ENCODE measurements at regions of chr3 and their contacts with region 1.

Region 1: DNA sequence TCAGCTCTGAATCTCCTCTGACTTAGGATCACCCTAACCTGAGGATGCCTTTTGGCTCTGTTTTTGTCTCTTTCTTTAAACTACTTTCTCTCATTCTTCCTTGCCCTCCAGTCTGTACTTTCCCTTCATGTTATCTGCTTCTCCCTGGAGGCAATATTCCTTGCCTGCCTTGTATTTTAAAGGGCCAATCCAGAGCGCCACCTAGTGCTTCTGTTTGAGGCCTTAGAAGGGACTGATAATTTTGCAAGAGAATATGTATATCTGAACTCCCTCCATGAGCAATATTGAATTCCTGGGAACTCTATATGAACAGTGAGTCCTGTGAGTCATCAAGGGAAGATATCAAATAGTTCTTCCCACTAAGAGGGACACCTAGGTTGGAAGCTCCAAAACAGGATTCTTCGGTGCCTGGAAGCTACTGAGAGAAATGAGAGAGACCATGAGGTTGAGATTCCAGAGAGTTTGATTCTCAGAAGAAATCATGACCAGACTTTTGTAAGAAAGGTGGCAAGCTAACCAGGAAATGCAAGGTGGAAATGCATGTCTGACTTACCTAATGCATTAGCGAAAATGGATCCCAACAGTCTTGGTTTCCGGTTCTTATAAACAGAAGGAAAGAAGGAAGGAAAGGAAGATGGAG is 203.8 kb upstream of the CD96 start:
- DNase-seq: peak in 4 of 5 donors; percentile 18 to 28 (median 23)
- H3K4me3 ChIP-seq: no peak overlapping the region
- H3K4me3 Mint-ChIP-seq: no peak overlapping the region
- H3K27ac ChIP-seq: no peak overlapping the region
- H3K27ac Mint-ChIP-seq: peak overlapping the region in 1 of 7 donors; percentile 3
- H3K4me1 ChIP-seq: no peaks in the 10 kb centered on the region
- H3K4me1 Mint-ChIP-seq: peaks cover 2 to 10% (median 4%) of the 10 kb centered on the region in 4 donors
- H3K27me3 ChIP-seq: no peaks in the 10 kb centered on the region
- H3K27me3 Mint-ChIP-seq: no peaks in the 10 kb centered on the region

Region 2: DNA sequence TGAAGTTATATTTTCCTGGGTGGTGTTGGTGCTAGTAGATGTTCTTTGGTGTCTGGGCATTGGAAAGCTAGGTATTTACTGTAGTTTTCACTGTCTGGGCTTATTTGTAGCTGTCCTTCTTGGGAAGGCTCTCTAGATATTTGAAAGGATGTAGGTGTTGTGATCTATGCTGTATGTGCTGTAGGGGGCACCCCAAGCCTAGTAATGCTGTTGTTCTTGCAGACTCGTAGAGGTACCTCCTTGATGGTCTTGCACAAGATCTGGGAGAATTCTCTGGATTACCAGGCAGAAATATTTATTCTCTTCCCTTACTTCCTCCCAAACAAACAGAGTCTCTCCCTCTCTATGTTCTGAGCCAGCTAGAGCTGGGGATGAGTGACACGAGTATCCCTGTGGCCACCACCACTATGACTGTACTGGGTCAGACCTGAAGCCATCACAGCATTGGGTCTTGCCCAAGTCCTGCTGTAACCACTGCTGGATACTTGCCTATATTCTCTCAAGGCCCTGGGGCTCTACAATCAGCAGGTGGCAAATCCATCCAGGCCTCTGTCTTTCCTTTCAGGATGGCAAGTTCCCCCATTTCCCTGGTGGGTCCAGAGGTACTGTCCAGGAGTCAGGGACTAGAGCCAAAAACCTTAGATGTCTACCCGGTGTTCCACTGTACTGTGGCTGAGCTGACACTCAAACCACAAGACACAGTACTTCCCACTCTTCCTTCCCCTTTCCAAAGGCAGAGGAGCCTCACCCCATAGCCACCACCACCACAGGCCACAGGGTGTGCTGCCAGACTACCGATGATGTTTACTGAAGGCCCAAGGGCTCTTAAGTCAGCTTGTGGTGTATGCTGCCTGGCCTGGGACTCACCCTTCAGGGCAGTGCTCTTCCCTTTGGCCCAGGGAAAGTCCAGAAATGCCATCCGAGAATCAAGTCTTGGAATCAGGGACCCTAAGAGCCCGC is 1805.6 kb before region 1 on chr3:
- CTCF ChIA-PET with region 1: interaction called, 4 read pairs
- POLR2A ChIA-PET with region 1: no interaction called
- intact Hi-C with region 1: loop called (anchors 5 kb)
- DNase-seq: peak; percentile 21 to 50 (median 41)
- H3K4me3 ChIP-seq: no peak overlapping the region
- H3K4me3 Mint-ChIP-seq: no peak overlapping the region
- H3K27ac ChIP-seq: no peak overlapping the region
- H3K27ac Mint-ChIP-seq: no peak overlapping the region
- H3K4me1 ChIP-seq: no peaks in the 10 kb centered on the region
- H3K4me1 Mint-ChIP-seq: no peaks in the 10 kb centered on the region
- H3K27me3 ChIP-seq: no peaks in the 10 kb centered on the region
- H3K27me3 Mint-ChIP-seq: peaks cover 2 to 3% of the 10 kb centered on the region in 2 donors

Region 3: GRCh38 chr3:111071257-111072015 is 266.7 kb before region 1 on chr3 and contains the start of gene NECTIN3:
- CTCF ChIA-PET with region 1: interaction called, 3 read pairs
- POLR2A ChIA-PET with region 1: interaction called, 3 read pairs
- intact Hi-C with region 1: loop called (anchors 5 kb)
- DNase-seq: peak; percentile 84 to 92 (median 87)
- H3K4me3 ChIP-seq: peak within 1 kb of the TSS; percentile 78 to 82
- H3K4me3 Mint-ChIP-seq: peak within 1 kb of the TSS; percentile 93 to 97 (median 96)
- H3K27ac ChIP-seq: peak within 1 kb of the TSS; percentile 57
- H3K27ac Mint-ChIP-seq: peak within 1 kb of the TSS; percentile 90 to 95 (median 93)
- H3K4me1 ChIP-seq: peaks cover 32% of the 10 kb centered on the region
- H3K4me1 Mint-ChIP-seq: peaks cover 33 to 54% (median 44%) of the 10 kb centered on the region in 4 donors
- H3K27me3 ChIP-seq: no peaks in the 10 kb centered on the region
- H3K27me3 Mint-ChIP-seq: peaks cover 0 to 4% of the 10 kb centered on the region in 2 donors
- total RNA-seq, gene NECTIN3: 12.2 to 15.6 TPM

Region 4: DNA sequence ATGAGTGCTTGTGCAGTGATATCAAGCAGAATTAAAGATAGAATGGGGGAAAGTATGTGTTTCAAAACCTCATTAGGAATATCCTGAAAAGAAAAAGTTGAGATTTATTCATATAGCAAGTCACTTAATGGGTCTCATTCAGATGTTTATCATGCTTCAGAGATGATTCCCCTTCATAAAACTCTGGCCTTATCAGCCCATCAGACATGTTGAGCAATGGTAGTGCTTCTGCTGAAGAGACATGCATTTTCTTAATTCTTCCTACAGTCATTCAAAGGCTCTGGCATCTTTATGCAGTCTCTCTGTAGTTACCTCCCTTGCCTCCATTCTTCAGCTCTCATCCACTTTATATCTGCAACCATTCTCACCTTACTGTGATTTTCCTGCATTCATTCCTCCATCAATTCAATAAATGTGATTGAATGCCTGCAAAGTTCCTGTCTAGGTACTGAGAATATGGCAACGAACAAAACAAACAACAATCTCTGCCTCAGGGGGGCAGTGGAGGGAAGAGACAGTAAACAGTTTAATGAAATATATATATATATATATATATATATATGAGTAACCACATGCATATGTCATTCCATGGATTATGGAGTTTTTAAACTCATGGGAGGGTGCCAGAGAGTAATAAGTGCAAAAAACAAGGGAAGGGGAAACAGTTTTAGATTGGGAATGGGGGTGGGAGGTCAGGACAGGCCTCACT is 128.0 kb before region 1 on chr3:
- CTCF ChIA-PET with region 1: interaction called, 14 read pairs
- POLR2A ChIA-PET with region 1: no interaction called
- intact Hi-C with region 1: loop called (anchors 2 kb)
- DNase-seq: no peak
- H3K4me3 ChIP-seq: no peak overlapping the region
- H3K4me3 Mint-ChIP-seq: no peak overlapping the region
- H3K27ac ChIP-seq: no peak overlapping the region
- H3K27ac Mint-ChIP-seq: no peak overlapping the region
- H3K4me1 ChIP-seq: no peaks in the 10 kb centered on the region
- H3K4me1 Mint-ChIP-seq: no peaks in the 10 kb centered on the region
- H3K27me3 ChIP-seq: no peaks in the 10 kb centered on the region
- H3K27me3 Mint-ChIP-seq: no peaks in the 10 kb centered on the region

Region 5: GRCh38 chr3:111351334-111351733 is 13.2 kb after region 1 on chr3:
- CTCF ChIA-PET with region 1: interaction called, 15 read pairs
- POLR2A ChIA-PET with region 1: no interaction called
- intact Hi-C with region 1: no loop called
- DNase-seq: no peak
- H3K4me3 ChIP-seq: no peak overlapping the region
- H3K4me3 Mint-ChIP-seq: no peak overlapping the region
- H3K27ac ChIP-seq: no peak overlapping the region
- H3K27ac Mint-ChIP-seq: no peak overlapping the region
- H3K4me1 ChIP-seq: no peaks in the 10 kb centered on the region
- H3K4me1 Mint-ChIP-seq: no peaks in the 10 kb centered on the region
- H3K27me3 ChIP-seq: no peaks in the 10 kb centered on the region
- H3K27me3 Mint-ChIP-seq: no peaks in the 10 kb centered on the region

Region 6: GRCh38 chr3:111465081-111465670 is 127.0 kb after region 1 on chr3:
- CTCF ChIA-PET with region 1: no interaction called
- POLR2A ChIA-PET with region 1: no interaction called
- intact Hi-C with region 1: no loop called
- DNase-seq: no peak
- H3K4me3 ChIP-seq: no peak overlapping the region
- H3K4me3 Mint-ChIP-seq: no peak overlapping the region
- H3K27ac ChIP-seq: no peak overlapping the region
- H3K27ac Mint-ChIP-seq: no peak overlapping the region
- H3K4me1 ChIP-seq: no peaks in the 10 kb centered on the region
- H3K4me1 Mint-ChIP-seq: no peaks in the 10 kb centered on the region
- H3K27me3 ChIP-seq: no peaks in the 10 kb centered on the region
- H3K27me3 Mint-ChIP-seq: no peaks in the 10 kb centered on the region